A673 (cell line): ENCODE measurements at regions of chrX and their contacts with region 1.

Region 1: DNA sequence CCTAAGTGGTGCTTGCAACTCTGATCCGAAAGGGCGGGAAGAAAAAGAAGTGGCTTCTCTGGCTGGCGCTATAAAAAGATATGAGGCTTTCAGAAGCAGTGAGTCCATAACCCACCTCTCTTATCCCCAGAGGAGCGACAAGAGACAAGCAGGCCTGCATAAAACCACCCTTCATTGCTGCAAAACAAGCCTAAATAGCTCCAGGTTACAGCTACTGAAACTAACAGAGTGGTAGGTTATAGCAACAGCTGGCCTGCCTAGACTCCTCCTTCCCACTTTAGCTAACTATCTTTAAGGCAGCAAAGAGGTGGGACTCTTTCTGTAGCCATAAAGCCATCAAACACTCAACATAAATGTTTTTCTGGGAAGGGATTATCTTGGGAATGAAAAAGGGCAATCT is 245.0 kb upstream of the GPR101 start:
- DNase-seq: no peak
- H3K4me3 ChIP-seq: no peak overlapping the region
- H3K27ac ChIP-seq: no peak overlapping the region
- H3K4me1 ChIP-seq: no peaks in the 10 kb centered on the region
- H3K27me3 ChIP-seq: no peaks in the 10 kb centered on the region
- CTCF ChIP-seq: no peak

Region 2: GRCh38 chrX:138018143-138018807 is 739.5 kb after region 1 on chrX:
- CTCF ChIA-PET with region 1: no interaction called
- POLR2A ChIA-PET with region 1: no interaction called
- intact Hi-C with region 1: loop called (anchors 10 kb)
- DNase-seq: peak; percentile 26
- H3K4me3 ChIP-seq: no peak overlapping the region
- H3K27ac ChIP-seq: no peak overlapping the region
- H3K4me1 ChIP-seq: no peaks in the 10 kb centered on the region
- H3K27me3 ChIP-seq: no peaks in the 10 kb centered on the region
- CTCF ChIP-seq: no peak